CD8-positive, alpha-beta T cell (primary cell): ENCODE measurements at regions of chr6 and their contacts with region 1.

Region 1: GRCh38 chr6:37207903-37208456 is 38.0 kb downstream of the PIM1 start:
- DNase-seq: peak; percentile 75 to 95 (median 87)
- ATAC-seq: peak; percentile 70
- H3K4me3 ChIP-seq: no peak overlapping the region
- H3K4me3 Mint-ChIP-seq: peak overlapping the region; percentile 35
- H3K27ac ChIP-seq: peak overlapping the region in 1 of 2 experiments; percentile 4
- H3K27ac Mint-ChIP-seq: peak overlapping the region; percentile 85
- H3K4me1 ChIP-seq: peaks cover 51% of the 10 kb centered on the region
- H3K4me1 Mint-ChIP-seq: peaks cover 51% of the 10 kb centered on the region
- H3K27me3 ChIP-seq: no peaks in the 10 kb centered on the region
- H3K27me3 Mint-ChIP-seq: no peaks in the 10 kb centered on the region
- CTCF ChIP-seq: peak; percentile 83

Region 2: GRCh38 chr6:36423101-36423824 is 784.7 kb before region 1 on chr6:
- CTCF ChIA-PET with region 1: no interaction called
- POLR2A ChIA-PET with region 1: no interaction called
- intact Hi-C with region 1: loop called in 1 of 2 experiments (anchors 2 kb)
- DNase-seq: peak; percentile 96 to 99 (median 98)
- ATAC-seq: peak; percentile 96
- H3K4me3 ChIP-seq: peak overlapping the region; percentile 63 to 74
- H3K4me3 Mint-ChIP-seq: peak overlapping the region; percentile 95
- H3K27ac ChIP-seq: peak overlapping the region; percentile 60 to 80
- H3K27ac Mint-ChIP-seq: peak overlapping the region; percentile 95
- H3K4me1 ChIP-seq: peaks cover 12% of the 10 kb centered on the region
- H3K4me1 Mint-ChIP-seq: peaks cover 11% of the 10 kb centered on the region
- H3K27me3 ChIP-seq: no peaks in the 10 kb centered on the region
- H3K27me3 Mint-ChIP-seq: no peaks in the 10 kb centered on the region
- CTCF ChIP-seq: peak; percentile 74

Region 3: DNA sequence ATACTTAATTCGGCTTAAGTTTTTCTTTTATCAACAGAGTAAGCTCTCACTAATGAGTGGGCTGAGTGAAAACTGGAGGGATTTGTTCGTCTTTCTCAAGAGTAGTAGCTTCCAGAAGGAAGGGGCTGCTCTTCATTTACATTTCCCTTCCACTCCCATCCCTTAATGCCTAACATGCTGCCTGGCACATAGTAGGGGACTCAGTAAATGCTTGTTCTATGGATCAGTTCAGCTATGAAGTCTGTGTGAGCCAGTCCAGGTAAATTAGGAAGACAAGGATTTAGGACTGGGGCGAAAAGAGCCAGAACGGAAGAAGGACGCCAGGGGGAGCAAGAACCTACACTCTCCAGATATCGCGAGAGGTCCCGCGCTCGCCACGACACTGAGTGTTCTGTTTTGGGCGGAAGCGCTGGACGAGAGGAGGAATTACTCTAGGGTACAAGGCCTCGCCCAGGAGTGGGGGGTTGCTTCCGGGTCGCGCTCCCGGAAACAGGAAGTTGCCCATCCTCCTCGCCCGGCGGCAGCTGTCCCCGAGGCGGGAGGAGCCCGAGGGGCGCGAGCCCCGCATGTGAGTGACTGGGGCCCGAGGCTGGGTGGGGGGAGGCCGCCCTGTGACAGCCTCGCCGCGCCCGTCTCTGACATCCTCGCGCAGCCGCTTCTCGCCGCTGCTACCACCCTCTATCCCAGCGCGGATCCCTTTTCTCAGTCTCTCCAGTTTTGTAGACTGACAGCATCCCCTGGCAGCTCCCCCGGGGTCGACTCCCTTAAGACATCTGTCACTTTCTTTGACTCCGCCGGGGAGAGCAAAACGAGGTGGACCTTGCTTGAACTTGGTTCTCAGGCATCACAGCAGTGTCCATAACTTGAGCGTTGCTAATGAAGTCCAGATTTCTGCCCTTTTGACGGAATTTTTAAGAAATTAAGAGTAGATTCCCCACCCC is 322.2 kb before region 1 on chr6 and contains the start of gene C6orf89:
- CTCF ChIA-PET with region 1: interaction called, 31 read pairs
- POLR2A ChIA-PET with region 1: interaction called, 3 read pairs
- intact Hi-C with region 1: loop called (anchors 1 kb)
- DNase-seq: peak; percentile 91 to 99 (median 97)
- ATAC-seq: peak; percentile 98
- H3K4me3 ChIP-seq: peak within 1 kb of the TSS; percentile 75 to 78
- H3K4me3 Mint-ChIP-seq: peak within 1 kb of the TSS; percentile 91
- H3K27ac ChIP-seq: peak within 1 kb of the TSS; percentile 63 to 91
- H3K27ac Mint-ChIP-seq: peak within 1 kb of the TSS; percentile 94
- H3K4me1 ChIP-seq: peaks cover 14% of the 10 kb centered on the region
- H3K4me1 Mint-ChIP-seq: peaks cover 38% of the 10 kb centered on the region
- H3K27me3 ChIP-seq: no peaks in the 10 kb centered on the region
- H3K27me3 Mint-ChIP-seq: no peaks in the 10 kb centered on the region
- CTCF ChIP-seq: peak; percentile 81
- total RNA-seq, gene C6orf89: 22.2 TPM

Region 4: GRCh38 chr6:37051138-37052026 is 156.6 kb before region 1 on chr6:
- CTCF ChIA-PET with region 1: interaction called, 139 read pairs
- POLR2A ChIA-PET with region 1: interaction called, 3 read pairs
- intact Hi-C with region 1: loop called (anchors 1 kb)
- DNase-seq: peak; percentile 83 to 94 (median 91)
- ATAC-seq: peak; percentile 71
- H3K4me3 ChIP-seq: peak overlapping the region in 1 of 2 experiments; percentile 44
- H3K4me3 Mint-ChIP-seq: peak overlapping the region; percentile 58
- H3K27ac ChIP-seq: peak overlapping the region; percentile 59 to 94
- H3K27ac Mint-ChIP-seq: peak overlapping the region; percentile 96
- H3K4me1 ChIP-seq: peaks cover 59% of the 10 kb centered on the region
- H3K4me1 Mint-ChIP-seq: peaks cover 58% of the 10 kb centered on the region
- H3K27me3 ChIP-seq: no peaks in the 10 kb centered on the region
- H3K27me3 Mint-ChIP-seq: no peaks in the 10 kb centered on the region
- CTCF ChIP-seq: peak; percentile 83

Region 5: GRCh38 chr6:37190159-37190535 is 17.8 kb before region 1 on chr6:
- CTCF ChIA-PET with region 1: interaction called, 47 read pairs
- POLR2A ChIA-PET with region 1: interaction called, 4 read pairs
- intact Hi-C with region 1: no loop called
- DNase-seq: no peak
- ATAC-seq: no peak
- H3K4me3 ChIP-seq: no peak overlapping the region
- H3K4me3 Mint-ChIP-seq: no peak overlapping the region
- H3K27ac ChIP-seq: no peak overlapping the region
- H3K27ac Mint-ChIP-seq: peak overlapping the region; percentile 32
- H3K4me1 ChIP-seq: peaks cover 59% of the 10 kb centered on the region
- H3K4me1 Mint-ChIP-seq: peaks cover 61% of the 10 kb centered on the region
- H3K27me3 ChIP-seq: no peaks in the 10 kb centered on the region
- H3K27me3 Mint-ChIP-seq: no peaks in the 10 kb centered on the region
- CTCF ChIP-seq: no peak